Mammary epithelial cell (primary cell): ENCODE measurements at regions of chr1 and their contacts with region 1.

Region 1: DNA sequence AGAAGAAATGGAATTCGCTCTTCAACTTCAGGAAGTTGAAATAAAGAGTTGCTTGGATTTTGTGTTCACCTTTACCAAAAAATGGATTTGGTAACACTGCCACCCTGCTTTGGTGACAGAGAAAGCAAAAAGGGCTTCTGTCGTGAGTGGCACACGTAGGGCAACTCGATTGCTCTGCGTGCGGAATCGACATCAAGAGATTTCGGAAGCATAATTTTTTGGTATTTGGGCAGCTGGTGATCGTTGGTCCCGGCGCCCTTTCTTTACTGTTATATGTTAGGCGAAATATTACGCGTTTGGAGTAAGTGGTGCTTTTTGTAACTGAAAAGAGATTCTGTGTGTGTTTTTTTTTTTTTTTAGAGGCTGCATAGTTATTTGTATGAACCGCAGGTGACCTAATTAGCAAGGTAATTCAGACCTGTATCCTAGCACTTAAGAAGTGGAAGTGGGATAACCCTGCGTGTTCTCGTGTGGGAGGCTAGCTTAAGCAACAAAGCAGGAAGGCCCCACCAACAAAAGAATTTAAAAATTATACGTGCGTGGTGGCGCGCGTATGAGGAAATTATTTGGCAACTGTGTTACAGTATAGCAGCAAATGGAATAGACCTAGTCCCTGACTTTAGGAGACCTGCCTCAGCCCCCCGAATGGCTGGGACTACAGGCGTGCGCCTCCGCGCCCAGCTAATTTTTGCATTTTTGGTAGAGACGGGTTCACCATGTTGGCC is at the start of gene RNU11:
- DNase-seq: peak; percentile 100
- H3K4me3 ChIP-seq: peak within 1 kb of the TSS; percentile 5 to 30 (median 21)
- H3K27ac ChIP-seq: peak within 1 kb of the TSS; percentile 98
- H3K4me1 ChIP-seq: peaks cover 17% of the 10 kb centered on the region
- H3K27me3 ChIP-seq: no peaks in the 10 kb centered on the region
- CTCF ChIP-seq: no peak
- total RNA-seq, gene RNU11: not detected

Region 2: DNA sequence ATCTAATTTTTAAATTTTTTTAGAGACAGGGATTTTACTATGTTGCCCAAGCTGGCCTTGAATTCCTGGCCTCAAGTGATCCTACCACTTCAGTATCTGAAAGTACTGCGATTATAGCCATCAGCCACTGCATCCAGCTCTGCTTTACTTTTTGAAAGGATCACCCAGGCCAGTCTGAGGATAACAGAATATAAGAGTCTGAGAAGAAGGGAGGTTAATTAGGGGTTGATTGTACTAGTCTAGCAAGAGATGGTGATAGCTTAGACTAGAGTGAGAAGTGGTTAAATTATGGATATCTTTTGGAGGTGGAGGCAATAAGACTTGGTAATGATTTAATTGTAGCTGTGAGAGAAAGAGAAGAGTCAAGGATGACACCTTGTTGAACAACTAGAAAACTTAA is 246.9 kb before region 1 on chr1:
- CTCF ChIA-PET with region 1: no interaction called
- dilution Hi-C with region 1: no loop called
- in situ Hi-C with region 1: no loop called
- intact Hi-C with region 1: no loop called
- DNase-seq: no peak
- H3K4me3 ChIP-seq: no peak overlapping the region
- H3K27ac ChIP-seq: no peak overlapping the region
- H3K4me1 ChIP-seq: no peaks in the 10 kb centered on the region
- H3K27me3 ChIP-seq: no peaks in the 10 kb centered on the region
- CTCF ChIP-seq: no peak

Region 3: DNA sequence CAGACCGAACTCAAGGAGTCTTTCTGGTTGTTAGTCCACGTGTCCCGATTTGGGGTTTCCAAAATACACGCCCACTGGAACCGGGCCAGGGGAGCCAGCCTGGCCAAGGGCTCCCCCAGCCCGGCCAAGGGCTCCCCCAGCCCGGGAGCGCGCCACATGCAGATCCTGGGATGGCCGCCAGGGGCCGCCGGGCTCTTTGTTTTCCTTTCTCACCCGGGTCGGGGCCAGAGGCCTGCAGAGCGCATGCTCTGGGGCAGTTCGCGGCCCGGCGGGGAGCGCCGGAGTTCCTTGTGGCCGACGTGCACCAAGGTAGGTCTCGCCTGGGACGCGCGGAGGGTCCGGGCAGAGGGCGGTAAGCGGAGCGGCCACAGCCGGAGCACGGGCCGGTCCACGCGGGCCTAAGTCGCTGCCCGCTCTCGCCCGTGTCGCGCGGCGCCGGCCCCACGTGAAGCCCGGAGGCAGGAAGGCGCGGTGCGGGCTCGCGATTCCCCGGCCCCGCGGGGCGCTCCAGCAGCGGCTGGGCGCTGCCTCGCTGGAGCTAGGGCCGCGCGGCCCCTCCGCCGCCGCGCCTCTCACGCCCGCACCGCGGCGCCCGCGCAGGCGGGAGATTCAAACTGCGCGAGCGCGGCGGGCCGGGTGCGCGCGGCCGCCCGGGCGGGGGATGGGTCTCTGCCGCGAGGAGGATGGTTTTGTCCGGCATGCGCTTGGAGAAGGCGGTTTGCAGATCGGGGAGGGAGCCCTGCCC is 130.5 kb before region 1 on chr1:
- CTCF ChIA-PET with region 1: no interaction called
- dilution Hi-C with region 1: no loop called
- in situ Hi-C with region 1: no loop called
- intact Hi-C with region 1: loop called (anchors 2 kb)
- DNase-seq: peak; percentile 85
- H3K4me3 ChIP-seq: peak overlapping the region; percentile 60 to 68 (median 61)
- H3K27ac ChIP-seq: peak overlapping the region; percentile 57
- H3K4me1 ChIP-seq: peaks cover 12% of the 10 kb centered on the region
- H3K27me3 ChIP-seq: no peaks in the 10 kb centered on the region
- CTCF ChIP-seq: peak; percentile 63 to 98

Region 4: GRCh38 chr1:28581536-28582247 is 66.9 kb before region 1 on chr1:
- CTCF ChIA-PET with region 1: no interaction called
- dilution Hi-C with region 1: loop called (anchors 5 kb)
- in situ Hi-C with region 1: no loop called
- intact Hi-C with region 1: loop called (anchors 1 kb)
- DNase-seq: peak; percentile 95
- H3K4me3 ChIP-seq: peak overlapping the region; percentile 73 to 96 (median 88)
- H3K27ac ChIP-seq: peak overlapping the region; percentile 87
- H3K4me1 ChIP-seq: peaks cover 23% of the 10 kb centered on the region
- H3K27me3 ChIP-seq: no peaks in the 10 kb centered on the region
- CTCF ChIP-seq: peak in 1 of 2 donors; percentile 2

Region 5: DNA sequence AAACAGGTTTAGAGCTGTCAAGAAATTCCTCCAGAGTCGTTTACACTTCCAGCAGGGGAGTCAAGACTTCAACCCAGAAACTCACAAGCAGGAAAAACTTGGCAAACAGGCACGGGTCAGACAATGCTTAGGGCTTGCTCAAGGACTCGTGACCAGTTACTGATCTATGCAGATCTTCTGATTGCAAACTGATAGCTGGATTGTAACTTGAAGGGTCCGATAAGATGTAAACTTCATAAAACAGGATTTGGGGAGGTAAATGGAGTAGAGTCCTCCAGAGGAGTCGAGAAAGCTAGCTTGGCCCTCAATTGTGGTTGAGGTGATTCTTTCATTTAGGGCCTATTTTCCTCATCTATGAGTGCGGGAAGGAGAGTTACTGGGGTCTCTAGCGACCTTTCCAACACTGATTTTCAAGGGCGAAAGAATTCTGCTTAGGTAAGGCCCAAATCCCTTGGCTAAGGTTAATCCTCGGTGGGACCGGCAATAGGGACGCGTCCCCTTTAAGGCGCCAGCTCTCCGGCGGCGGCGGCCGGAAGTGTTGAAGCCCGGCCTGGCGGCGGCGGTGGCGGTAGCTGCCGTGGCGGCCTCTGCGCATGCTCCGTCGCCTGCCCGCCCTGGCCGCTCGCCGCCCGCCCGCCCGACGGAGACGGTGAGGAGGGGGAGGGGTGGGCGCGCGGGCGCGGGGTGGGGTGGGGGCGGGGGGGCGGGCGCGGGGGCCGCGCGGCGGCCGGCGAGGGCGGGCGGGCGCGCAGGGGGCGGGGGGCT is 19.7 kb after region 1 on chr1 and contains the start of gene GMEB1:
- CTCF ChIA-PET with region 1: no interaction called
- dilution Hi-C with region 1: no loop called
- in situ Hi-C with region 1: no loop called
- intact Hi-C with region 1: loop called (anchors 2 kb)
- DNase-seq: peak; percentile 80
- H3K4me3 ChIP-seq: peak within 1 kb of the TSS; percentile 70 to 92 (median 73)
- H3K27ac ChIP-seq: peak within 1 kb of the TSS; percentile 81
- H3K4me1 ChIP-seq: peaks cover 6% of the 10 kb centered on the region
- H3K27me3 ChIP-seq: no peaks in the 10 kb centered on the region
- CTCF ChIP-seq: no peak
- total RNA-seq, gene GMEB1: 10.1 to 11.0 TPM

Region 6: GRCh38 chr1:28736450-28737306 is 88.0 kb after region 1 on chr1 and contains the start of gene YTHDF2:
- CTCF ChIA-PET with region 1: interaction called, 4 read pairs
- dilution Hi-C with region 1: no loop called
- in situ Hi-C with region 1: no loop called
- intact Hi-C with region 1: loop called (anchors 1 kb)
- DNase-seq: peak; percentile 96
- H3K4me3 ChIP-seq: peak within 1 kb of the TSS; percentile 89 to 99 (median 92)
- H3K27ac ChIP-seq: peak within 1 kb of the TSS; percentile 81
- H3K4me1 ChIP-seq: peaks cover 25% of the 10 kb centered on the region
- H3K27me3 ChIP-seq: no peaks in the 10 kb centered on the region
- CTCF ChIP-seq: peak; percentile 66 to 92
- total RNA-seq, gene YTHDF2: 75.8 to 84.7 TPM

Region 7: GRCh38 chr1:28756846-28757245 is 108.2 kb after region 1 on chr1:
- CTCF ChIA-PET with region 1: no interaction called
- dilution Hi-C with region 1: no loop called
- in situ Hi-C with region 1: no loop called
- intact Hi-C with region 1: loop called (anchors 1 kb)
- DNase-seq: no peak
- H3K4me3 ChIP-seq: no peak overlapping the region
- H3K27ac ChIP-seq: no peak overlapping the region
- H3K4me1 ChIP-seq: peaks cover 7% of the 10 kb centered on the region
- H3K27me3 ChIP-seq: no peaks in the 10 kb centered on the region
- CTCF ChIP-seq: peak; percentile 25 to 28

Region 8: DNA sequence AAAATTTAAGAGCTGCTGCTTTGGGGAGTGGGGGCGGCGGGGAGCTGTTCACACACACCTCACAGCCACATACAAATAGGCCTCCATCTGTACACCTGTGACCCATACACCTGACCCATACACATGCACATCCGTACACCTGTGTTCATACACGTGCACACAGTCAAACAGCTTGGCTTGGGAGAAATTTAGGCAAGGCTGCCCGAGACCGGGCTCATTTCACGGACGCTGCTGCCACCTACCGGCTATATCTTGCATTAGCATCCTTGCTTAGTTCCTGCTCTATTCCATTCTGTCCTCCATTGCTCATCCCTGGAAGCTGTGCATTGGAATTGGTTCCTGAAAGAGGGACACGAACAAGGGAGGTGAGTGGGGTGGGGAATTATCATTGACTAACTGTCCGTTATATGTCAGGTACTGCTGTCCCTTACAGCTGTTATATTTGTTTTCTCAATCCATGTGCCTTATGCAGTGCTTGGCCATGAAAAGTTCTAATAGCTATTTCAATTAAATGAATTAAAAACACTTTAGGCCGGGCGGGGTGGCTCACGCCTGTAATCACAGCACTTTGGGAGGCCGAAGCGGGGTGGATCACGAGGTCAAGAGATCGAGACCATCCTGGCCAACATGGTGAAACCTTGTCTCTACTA is 228.6 kb after region 1 on chr1:
- CTCF ChIA-PET with region 1: no interaction called
- dilution Hi-C with region 1: no loop called
- in situ Hi-C with region 1: loop called (anchors 10 to 25 kb)
- intact Hi-C with region 1: loop called (anchors 1 kb)
- DNase-seq: peak; percentile 72
- H3K4me3 ChIP-seq: no peak overlapping the region
- H3K27ac ChIP-seq: no peak overlapping the region
- H3K4me1 ChIP-seq: peaks cover 6% of the 10 kb centered on the region
- H3K27me3 ChIP-seq: no peaks in the 10 kb centered on the region
- CTCF ChIP-seq: peak; percentile 91 to 94